MCF 10A (cell line): ENCODE measurements at regions of chr2 and their contacts with region 1.

Region 1: DNA sequence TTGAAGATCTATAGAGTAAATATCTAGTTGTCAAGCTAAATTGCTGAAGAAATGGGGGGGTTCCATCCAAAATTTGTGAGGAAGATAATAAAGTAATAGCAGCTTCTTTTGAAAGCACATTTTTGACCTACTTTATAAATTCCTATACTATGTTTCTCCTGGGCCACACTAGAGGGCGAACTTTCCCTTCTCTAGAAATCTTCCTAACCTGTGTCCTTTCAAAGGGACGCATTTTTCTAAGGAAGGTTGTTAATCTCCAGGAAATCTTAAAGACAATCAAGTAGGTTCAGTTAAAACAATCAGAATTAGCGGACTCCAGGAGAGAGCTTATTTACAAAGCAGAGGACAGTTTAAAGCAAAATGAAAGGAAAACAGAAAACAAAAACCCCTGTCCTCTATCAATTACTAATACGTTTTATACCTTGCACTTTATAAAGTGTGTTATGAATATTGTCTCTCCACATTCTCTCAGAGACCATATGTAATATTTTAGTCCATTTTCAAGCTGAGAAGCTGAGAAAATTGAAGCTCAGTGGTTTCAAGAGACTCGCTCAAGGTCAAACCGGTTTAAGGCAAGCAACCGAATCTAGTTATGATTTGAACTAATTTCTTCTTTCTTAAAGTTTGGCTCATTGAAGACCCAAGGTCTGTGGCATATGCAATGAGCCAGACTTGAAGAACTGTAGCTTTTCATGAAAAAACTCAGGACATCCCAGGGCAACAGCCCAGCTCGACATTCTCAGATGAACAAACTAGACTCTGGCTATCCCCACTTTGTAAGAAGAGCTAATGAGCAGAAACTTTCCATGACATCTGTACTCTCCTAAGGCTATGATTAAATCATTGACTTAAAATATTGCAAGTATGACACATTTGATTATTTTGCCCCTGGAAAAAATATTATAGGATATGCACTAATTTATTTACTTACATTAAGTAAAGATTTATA is 273.6 kb downstream of the PAX3 start:
- DNase-seq: peak; percentile 66
- H3K4me3 Mint-ChIP-seq: no peak overlapping the region
- H3K27ac Mint-ChIP-seq: no peak overlapping the region
- H3K4me1 Mint-ChIP-seq: no peaks in the 10 kb centered on the region
- H3K27me3 Mint-ChIP-seq: peaks cover 9% of the 10 kb centered on the region
- CTCF ChIP-seq: peak; percentile 69

Region 2: DNA sequence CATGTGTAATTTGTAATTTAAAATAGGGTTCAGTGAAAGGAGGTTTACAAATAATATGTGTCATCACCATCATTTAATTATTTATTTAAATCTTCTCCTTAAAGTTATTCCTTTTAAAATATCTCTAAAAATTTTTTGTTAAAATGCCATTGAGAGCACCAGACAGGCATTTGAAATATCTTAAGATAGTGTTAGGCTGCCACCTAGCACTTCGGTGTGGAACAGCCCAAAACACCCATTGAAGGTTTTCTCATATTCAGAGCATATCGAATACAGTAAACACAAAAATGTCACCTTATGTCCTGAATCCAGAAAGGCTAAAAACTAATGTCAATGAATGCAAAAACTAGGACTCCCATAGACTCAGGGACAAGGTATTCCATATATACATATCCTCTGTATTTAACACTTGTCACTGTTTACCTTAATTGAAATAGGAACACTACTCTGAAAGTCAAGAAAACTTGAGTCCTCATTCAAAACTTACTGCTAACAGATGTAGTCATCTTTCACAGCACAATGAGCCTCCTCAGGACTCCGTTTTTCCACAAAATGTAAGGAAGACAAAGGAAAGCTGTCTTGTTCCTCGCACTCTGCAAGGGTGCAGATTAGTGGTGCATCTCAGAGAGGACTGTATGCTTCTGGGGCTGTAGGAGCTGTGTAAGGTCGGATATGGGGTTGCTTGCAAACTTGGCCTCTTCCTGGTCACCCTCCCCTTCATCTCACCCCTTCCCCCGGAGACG is 55.9 kb before region 1 on chr2:
- CTCF ChIA-PET with region 1: no interaction called
- POLR2A ChIA-PET with region 1: no interaction called
- intact Hi-C with region 1: no loop called
- DNase-seq: peak; percentile 54
- H3K4me3 Mint-ChIP-seq: no peak overlapping the region
- H3K27ac Mint-ChIP-seq: no peak overlapping the region
- H3K4me1 Mint-ChIP-seq: no peaks in the 10 kb centered on the region
- H3K27me3 Mint-ChIP-seq: no peaks in the 10 kb centered on the region
- CTCF ChIP-seq: peak; percentile 64

Region 3: DNA sequence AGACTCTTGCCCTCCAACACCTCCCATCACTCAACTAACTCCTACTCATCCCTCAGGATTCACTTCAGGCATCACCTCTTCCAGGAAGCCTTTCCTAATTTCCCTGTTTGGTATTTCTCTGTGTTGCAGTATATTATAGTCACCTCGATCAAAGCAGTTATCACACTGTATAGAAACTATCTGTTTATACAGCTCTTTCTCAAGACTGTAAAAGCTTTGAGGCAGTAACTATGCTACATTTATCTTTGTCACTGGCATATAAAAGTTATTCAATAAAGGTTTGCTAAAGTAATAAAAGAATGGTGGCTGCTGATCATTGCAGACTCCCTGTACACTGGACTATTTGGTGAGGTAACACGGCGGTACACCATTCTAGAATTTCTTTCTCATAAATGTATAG is 11.3 kb before region 1 on chr2:
- CTCF ChIA-PET with region 1: interaction called, 26 read pairs
- POLR2A ChIA-PET with region 1: no interaction called
- intact Hi-C with region 1: no loop called
- DNase-seq: no peak
- H3K4me3 Mint-ChIP-seq: no peak overlapping the region
- H3K27ac Mint-ChIP-seq: no peak overlapping the region
- H3K4me1 Mint-ChIP-seq: no peaks in the 10 kb centered on the region
- H3K27me3 Mint-ChIP-seq: peaks cover 68% of the 10 kb centered on the region
- CTCF ChIP-seq: no peak

Region 4: GRCh38 chr2:222038067-222038802 is 13.0 kb after region 1 on chr2:
- CTCF ChIA-PET with region 1: interaction called, 45 read pairs
- POLR2A ChIA-PET with region 1: interaction called, 7 read pairs
- intact Hi-C with region 1: no loop called
- DNase-seq: peak; percentile 43
- H3K4me3 Mint-ChIP-seq: no peak overlapping the region
- H3K27ac Mint-ChIP-seq: no peak overlapping the region
- H3K4me1 Mint-ChIP-seq: peaks cover 6% of the 10 kb centered on the region
- H3K27me3 Mint-ChIP-seq: no peaks in the 10 kb centered on the region
- CTCF ChIP-seq: peak; percentile 39

Region 5: GRCh38 chr2:222049946-222050345 is 24.7 kb after region 1 on chr2:
- CTCF ChIA-PET with region 1: interaction called, 39 read pairs
- POLR2A ChIA-PET with region 1: no interaction called
- intact Hi-C with region 1: no loop called
- DNase-seq: peak; percentile 86
- H3K4me3 Mint-ChIP-seq: no peak overlapping the region
- H3K27ac Mint-ChIP-seq: no peak overlapping the region
- H3K4me1 Mint-ChIP-seq: peaks cover 31% of the 10 kb centered on the region
- H3K27me3 Mint-ChIP-seq: peaks cover 73% of the 10 kb centered on the region
- CTCF ChIP-seq: no peak

Region 6: GRCh38 chr2:222057347-222058073 is 32.3 kb after region 1 on chr2:
- CTCF ChIA-PET with region 1: interaction called, 13 read pairs
- POLR2A ChIA-PET with region 1: interaction called, 3 read pairs
- intact Hi-C with region 1: no loop called
- DNase-seq: no peak
- H3K4me3 Mint-ChIP-seq: no peak overlapping the region
- H3K27ac Mint-ChIP-seq: no peak overlapping the region
- H3K4me1 Mint-ChIP-seq: peaks cover 5% of the 10 kb centered on the region
- H3K27me3 Mint-ChIP-seq: peaks cover 81% of the 10 kb centered on the region
- CTCF ChIP-seq: peak; percentile 54

Region 7: GRCh38 chr2:222561817-222562645 is 536.8 kb after region 1 on chr2:
- CTCF ChIA-PET with region 1: interaction called, 10 read pairs
- POLR2A ChIA-PET with region 1: no interaction called
- intact Hi-C with region 1: loop called (anchors 5 kb)
- DNase-seq: peak; percentile 78
- H3K4me3 Mint-ChIP-seq: no peak overlapping the region
- H3K27ac Mint-ChIP-seq: no peak overlapping the region
- H3K4me1 Mint-ChIP-seq: peaks cover 7% of the 10 kb centered on the region
- H3K27me3 Mint-ChIP-seq: no peaks in the 10 kb centered on the region
- CTCF ChIP-seq: peak; percentile 72

Region 8: GRCh38 chr2:222613715-222614331 is 588.6 kb after region 1 on chr2:
- CTCF ChIA-PET with region 1: interaction called, 24 read pairs
- POLR2A ChIA-PET with region 1: no interaction called
- intact Hi-C with region 1: loop called (anchors 1 kb)
- DNase-seq: peak; percentile 59
- H3K4me3 Mint-ChIP-seq: no peak overlapping the region
- H3K27ac Mint-ChIP-seq: no peak overlapping the region
- H3K4me1 Mint-ChIP-seq: no peaks in the 10 kb centered on the region
- H3K27me3 Mint-ChIP-seq: no peaks in the 10 kb centered on the region
- CTCF ChIP-seq: peak; percentile 69